ENCODE measurements at regions of chr12 and their contacts with region 1.

Region 1: DNA sequence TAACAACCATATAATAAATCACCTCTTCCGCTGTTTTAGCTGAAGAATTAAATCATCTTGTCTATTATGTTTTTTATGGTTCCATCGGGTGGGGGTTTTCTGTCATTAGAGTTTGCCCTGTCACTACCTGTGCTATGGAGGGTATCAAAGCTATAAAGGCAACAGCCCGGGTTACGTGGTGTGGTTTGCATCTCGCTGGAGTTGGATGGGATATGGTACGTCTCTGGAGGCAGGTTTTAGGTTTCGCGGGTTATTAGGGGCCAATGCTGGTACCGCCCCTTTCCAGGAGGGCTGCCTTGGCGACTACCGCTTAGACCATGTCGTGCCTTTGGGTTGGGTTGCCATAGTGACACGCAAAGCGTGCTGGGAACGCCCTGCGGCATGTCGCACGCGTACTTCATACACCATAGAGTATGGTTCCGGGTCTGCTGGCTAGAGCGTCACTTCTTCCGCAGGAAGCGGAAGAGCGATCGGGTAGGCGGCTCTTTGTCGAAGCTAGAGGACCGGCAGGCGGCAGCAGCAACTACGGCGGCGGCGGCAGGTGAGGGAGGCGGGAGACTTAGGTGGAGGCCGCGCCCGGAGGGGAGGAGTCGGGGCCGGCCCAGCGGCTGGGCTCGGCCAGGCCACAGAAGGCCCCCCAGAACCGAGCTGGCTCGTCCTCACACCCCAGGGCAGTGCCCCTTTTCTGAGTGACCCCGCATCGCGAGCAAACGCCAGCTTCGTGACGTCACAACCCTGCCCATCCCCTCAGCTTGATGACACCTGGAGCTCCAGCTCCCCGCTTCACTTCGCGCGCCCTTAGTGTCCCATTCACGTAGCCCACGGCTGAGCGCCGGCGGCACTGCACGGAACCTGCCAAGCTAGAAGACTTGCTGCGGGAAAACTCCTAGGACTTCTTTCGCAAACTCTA is at the start of gene ZC3H10:
- DNase-seq: peak; percentile 99
- H3K4me3 Mint-ChIP-seq: peak within 1 kb of the TSS; percentile 95
- H3K27ac Mint-ChIP-seq: peak within 1 kb of the TSS; percentile 100
- H3K4me1 Mint-ChIP-seq: peaks cover 18% of the 10 kb centered on the region
- H3K27me3 Mint-ChIP-seq: no peaks in the 10 kb centered on the region
- CTCF ChIP-seq: peak; percentile 21
- total RNA-seq, gene ZC3H10: 2.8 and 3.5 TPM in 2 replicates

Region 2: GRCh38 chr12:55940065-55940732 is 177.8 kb before region 1 on chr12:
- CTCF ChIA-PET with region 1: no interaction called
- POLR2A ChIA-PET with region 1: no interaction called
- intact Hi-C with region 1: no loop called
- DNase-seq: peak; percentile 91
- H3K4me3 Mint-ChIP-seq: peak overlapping the region; percentile 48
- H3K27ac Mint-ChIP-seq: peak overlapping the region; percentile 52
- H3K4me1 Mint-ChIP-seq: peaks cover 49% of the 10 kb centered on the region
- H3K27me3 Mint-ChIP-seq: no peaks in the 10 kb centered on the region
- CTCF ChIP-seq: peak; percentile 85

Region 3: GRCh38 chr12:55996715-55997534 is 121.1 kb before region 1 on chr12 and contains the start of gene SUOX:
- CTCF ChIA-PET with region 1: interaction called, 4 read pairs
- POLR2A ChIA-PET with region 1: interaction called, 16 read pairs
- intact Hi-C with region 1: loop called (anchors 2 kb)
- DNase-seq: peak; percentile 98
- H3K4me3 Mint-ChIP-seq: peak within 1 kb of the TSS; percentile 92
- H3K27ac Mint-ChIP-seq: peak within 1 kb of the TSS; percentile 28
- H3K4me1 Mint-ChIP-seq: peaks cover 12% of the 10 kb centered on the region
- H3K27me3 Mint-ChIP-seq: no peaks in the 10 kb centered on the region
- CTCF ChIP-seq: no peak
- total RNA-seq, gene SUOX: 6.3 and 7.9 TPM in 2 replicates

Region 4: DNA sequence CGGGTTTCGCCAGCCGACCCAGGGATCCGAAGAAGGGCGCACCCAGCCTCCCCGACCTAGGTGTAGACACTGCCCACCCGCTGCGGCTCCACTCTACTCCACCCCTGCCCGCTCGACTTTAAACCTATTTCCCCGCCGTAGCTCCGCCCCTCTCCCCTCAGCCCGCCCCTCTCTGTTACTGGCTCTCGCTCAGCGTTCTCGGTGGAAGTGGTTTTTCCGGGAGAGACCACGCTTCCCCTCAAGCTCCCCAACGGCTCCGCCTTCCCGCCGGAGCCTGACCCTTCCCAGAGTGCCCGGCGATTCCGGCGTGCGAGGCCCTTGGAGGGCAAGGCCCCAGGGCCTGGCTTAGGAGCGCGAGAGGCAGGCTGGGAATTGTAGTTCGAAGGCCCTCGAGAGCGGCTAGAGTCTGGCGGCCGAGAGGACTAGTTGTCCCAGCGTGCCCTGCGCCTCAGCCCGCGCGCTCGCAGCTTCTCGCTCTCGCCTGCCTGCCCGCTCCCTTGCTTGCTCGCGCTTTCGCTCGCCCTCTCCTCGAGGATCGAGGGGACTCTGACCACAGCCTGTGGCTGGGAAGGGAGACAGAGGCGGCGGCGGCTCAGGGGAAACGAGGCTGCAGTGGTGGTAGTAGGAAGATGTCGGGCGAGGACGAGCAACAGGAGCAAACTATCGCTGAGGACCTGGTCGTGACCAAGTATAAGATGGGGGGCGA is 13.8 kb before region 1 on chr12 and contains the start of gene PA2G4:
- CTCF ChIA-PET with region 1: interaction called, 18 read pairs
- POLR2A ChIA-PET with region 1: interaction called, 249 read pairs
- intact Hi-C with region 1: no loop called
- DNase-seq: peak; percentile 99
- H3K4me3 Mint-ChIP-seq: peak within 1 kb of the TSS; percentile 97
- H3K27ac Mint-ChIP-seq: peak within 1 kb of the TSS; percentile 95
- H3K4me1 Mint-ChIP-seq: peaks cover 9% of the 10 kb centered on the region
- H3K27me3 Mint-ChIP-seq: no peaks in the 10 kb centered on the region
- CTCF ChIP-seq: no peak
- total RNA-seq, gene PA2G4: 158 and 205 TPM in 2 replicates

Region 5: GRCh38 chr12:56158029-56158925 is 40.2 kb after region 1 on chr12 and contains the start of gene MYL6:
- CTCF ChIA-PET with region 1: interaction called, 30 read pairs
- POLR2A ChIA-PET with region 1: interaction called, 70 read pairs
- intact Hi-C with region 1: loop called (anchors 5 kb)
- DNase-seq: peak; percentile 98
- H3K4me3 Mint-ChIP-seq: peak within 1 kb of the TSS; percentile 97
- H3K27ac Mint-ChIP-seq: peak within 1 kb of the TSS; percentile 100
- H3K4me1 Mint-ChIP-seq: peaks cover 35% of the 10 kb centered on the region
- H3K27me3 Mint-ChIP-seq: no peaks in the 10 kb centered on the region
- CTCF ChIP-seq: no peak
- total RNA-seq, gene MYL6: 716 and 997 TPM in 2 replicates

Region 6: GRCh38 chr12:56258057-56258819 is 140.2 kb after region 1 on chr12 and contains the start of gene ANKRD52:
- CTCF ChIA-PET with region 1: interaction called, 13 read pairs
- POLR2A ChIA-PET with region 1: interaction called, 11 read pairs
- intact Hi-C with region 1: loop called (anchors 1 kb)
- DNase-seq: peak; percentile 70
- H3K4me3 Mint-ChIP-seq: peak within 1 kb of the TSS; percentile 84
- H3K27ac Mint-ChIP-seq: peak within 1 kb of the TSS; percentile 71
- H3K4me1 Mint-ChIP-seq: peaks cover 29% of the 10 kb centered on the region
- H3K27me3 Mint-ChIP-seq: no peaks in the 10 kb centered on the region
- CTCF ChIP-seq: peak; percentile 59
- total RNA-seq, gene ANKRD52: 46.3 and 73.8 TPM in 2 replicates

Region 7: DNA sequence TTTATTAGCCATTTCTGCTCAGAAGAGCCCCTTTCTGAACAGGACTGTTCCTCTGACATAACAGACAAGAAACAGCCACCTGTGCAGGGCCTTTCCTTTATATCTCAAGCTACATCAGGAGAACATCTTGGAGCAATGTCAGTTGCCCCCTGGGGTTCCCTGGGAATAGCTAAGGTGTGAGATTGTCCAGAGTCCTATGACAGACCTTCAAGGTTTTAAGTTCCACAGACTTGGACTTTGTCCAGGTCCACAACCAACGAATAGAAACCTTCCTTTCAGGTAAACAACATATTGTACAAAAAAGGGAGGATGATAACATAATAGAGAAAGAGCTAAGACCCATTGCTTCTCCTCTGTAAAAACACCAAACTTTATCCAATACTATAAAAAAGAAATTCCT is 223.6 kb after region 1 on chr12:
- CTCF ChIA-PET with region 1: no interaction called
- POLR2A ChIA-PET with region 1: no interaction called
- intact Hi-C with region 1: no loop called
- DNase-seq: no peak
- H3K4me3 Mint-ChIP-seq: no peak overlapping the region
- H3K27ac Mint-ChIP-seq: no peak overlapping the region
- H3K4me1 Mint-ChIP-seq: peaks cover 10% of the 10 kb centered on the region
- H3K27me3 Mint-ChIP-seq: no peaks in the 10 kb centered on the region
- CTCF ChIP-seq: no peak

Region 8: DNA sequence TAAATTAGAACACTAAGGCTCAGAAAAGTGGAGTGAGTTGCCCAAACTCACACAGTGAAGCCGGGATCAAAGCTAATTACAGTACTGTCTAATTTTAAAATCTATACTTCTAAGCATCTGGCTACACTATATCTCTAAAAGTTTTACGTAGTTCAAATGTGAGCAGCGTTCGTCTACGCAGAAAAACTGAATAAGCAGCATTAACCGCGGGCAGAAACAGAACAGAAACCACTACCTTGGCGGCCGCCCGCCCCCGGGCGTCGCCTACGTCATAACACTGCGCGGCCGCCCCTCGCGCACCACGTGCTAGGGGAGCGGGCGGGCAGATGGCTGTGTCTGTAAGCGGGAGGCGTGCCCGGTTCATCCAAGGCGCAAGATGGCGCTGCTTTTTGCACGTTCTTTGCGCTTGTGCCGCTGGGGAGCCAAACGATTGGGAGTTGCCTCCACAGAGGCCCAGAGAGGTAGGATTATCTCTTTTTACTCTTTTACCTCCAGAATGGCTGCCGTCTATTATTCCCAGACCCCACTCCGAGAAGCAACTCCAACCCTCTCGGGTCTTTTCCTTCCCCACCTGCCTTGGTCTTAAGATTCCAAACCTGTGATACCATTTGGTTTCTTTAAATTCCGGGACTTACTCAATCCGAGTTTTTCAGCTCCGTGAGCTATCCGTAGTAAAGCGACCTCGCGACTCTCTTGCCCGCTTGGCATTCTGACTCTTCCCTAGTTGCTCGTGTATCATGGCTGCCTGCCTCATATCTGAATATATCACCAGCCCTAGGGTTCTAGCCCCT is 350.4 kb after region 1 on chr12 and contains the start of gene SPRYD4:
- CTCF ChIA-PET with region 1: interaction called, 4 read pairs
- POLR2A ChIA-PET with region 1: interaction called, 11 read pairs
- intact Hi-C with region 1: loop called (anchors 5 kb)
- DNase-seq: peak; percentile 93
- H3K4me3 Mint-ChIP-seq: peak within 1 kb of the TSS; percentile 97
- H3K27ac Mint-ChIP-seq: peak within 1 kb of the TSS; percentile 96
- H3K4me1 Mint-ChIP-seq: peaks cover 14% of the 10 kb centered on the region
- H3K27me3 Mint-ChIP-seq: no peaks in the 10 kb centered on the region
- CTCF ChIP-seq: peak; percentile 23
- total RNA-seq, gene SPRYD4: 3.5 and 3.9 TPM in 2 replicates

Region 9: DNA sequence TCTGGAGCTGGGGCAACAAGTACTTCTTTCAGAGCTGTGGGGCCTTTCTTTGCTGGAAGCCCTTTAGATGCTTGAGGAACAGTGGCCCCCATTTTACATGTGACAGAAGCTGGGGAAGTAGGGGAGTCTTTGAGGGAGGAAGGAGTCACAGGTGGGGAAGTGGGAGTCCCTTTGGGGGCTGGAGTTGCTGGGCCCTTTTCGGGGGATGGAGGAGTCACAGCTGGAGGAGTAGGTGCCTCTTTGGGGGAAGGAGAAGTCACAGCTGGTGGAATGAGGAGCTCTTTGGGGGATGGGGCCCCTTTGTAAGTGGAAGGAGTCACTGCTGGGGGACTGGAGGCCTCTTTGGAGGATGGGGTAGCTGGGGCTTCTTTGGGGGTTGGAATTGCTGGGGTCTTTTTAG is 598.4 kb after region 1 on chr12:
- CTCF ChIA-PET with region 1: no interaction called
- POLR2A ChIA-PET with region 1: no interaction called
- intact Hi-C with region 1: no loop called
- DNase-seq: no peak
- H3K4me3 Mint-ChIP-seq: no peak overlapping the region
- H3K27ac Mint-ChIP-seq: no peak overlapping the region
- H3K4me1 Mint-ChIP-seq: peaks cover 46% of the 10 kb centered on the region
- H3K27me3 Mint-ChIP-seq: no peaks in the 10 kb centered on the region
- CTCF ChIP-seq: no peak

Region 10: DNA sequence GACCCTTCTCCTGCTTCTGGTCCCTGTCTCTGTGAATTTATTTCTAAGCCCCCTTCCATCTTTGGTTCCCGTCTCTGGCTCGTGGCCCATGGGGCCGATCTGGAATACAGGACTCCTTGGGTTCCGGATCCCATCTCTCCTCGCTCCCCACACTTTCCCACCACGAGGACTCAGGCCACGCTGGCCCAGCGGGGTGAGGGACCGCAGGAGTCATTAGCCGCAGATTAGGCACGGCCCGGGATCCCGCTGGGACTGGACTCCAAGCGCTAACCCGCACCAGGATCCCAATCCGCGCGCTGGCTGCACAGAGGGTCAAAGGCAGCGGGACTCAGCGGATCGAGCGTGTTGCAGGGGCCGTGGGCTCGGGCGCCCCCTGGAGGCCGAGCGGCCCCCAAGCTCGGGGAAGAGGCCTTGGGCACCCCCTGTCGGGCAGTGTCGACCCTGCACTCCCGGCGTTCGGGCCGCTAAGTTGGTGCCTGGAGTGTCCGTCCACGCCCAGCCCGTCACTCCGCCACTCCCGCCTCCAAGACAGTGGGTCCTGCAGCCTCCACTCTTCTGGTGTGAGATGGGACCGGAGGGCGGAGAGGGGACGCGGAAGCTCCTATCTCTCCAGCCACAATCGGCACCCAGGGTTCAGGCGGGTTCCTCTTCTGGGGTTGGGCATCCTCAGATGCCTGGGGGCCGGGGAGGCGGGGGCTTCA is 1121.0 kb after region 1 on chr12:
- CTCF ChIA-PET with region 1: no interaction called
- POLR2A ChIA-PET with region 1: no interaction called
- intact Hi-C with region 1: no loop called
- DNase-seq: peak; percentile 84
- H3K4me3 Mint-ChIP-seq: peak overlapping the region; percentile 68
- H3K27ac Mint-ChIP-seq: peak overlapping the region; percentile 4
- H3K4me1 Mint-ChIP-seq: peaks cover 46% of the 10 kb centered on the region
- H3K27me3 Mint-ChIP-seq: no peaks in the 10 kb centered on the region
- CTCF ChIP-seq: peak; percentile 100